ENCODE measurements at regions of chr7 and their contacts with region 1.

Region 1: DNA sequence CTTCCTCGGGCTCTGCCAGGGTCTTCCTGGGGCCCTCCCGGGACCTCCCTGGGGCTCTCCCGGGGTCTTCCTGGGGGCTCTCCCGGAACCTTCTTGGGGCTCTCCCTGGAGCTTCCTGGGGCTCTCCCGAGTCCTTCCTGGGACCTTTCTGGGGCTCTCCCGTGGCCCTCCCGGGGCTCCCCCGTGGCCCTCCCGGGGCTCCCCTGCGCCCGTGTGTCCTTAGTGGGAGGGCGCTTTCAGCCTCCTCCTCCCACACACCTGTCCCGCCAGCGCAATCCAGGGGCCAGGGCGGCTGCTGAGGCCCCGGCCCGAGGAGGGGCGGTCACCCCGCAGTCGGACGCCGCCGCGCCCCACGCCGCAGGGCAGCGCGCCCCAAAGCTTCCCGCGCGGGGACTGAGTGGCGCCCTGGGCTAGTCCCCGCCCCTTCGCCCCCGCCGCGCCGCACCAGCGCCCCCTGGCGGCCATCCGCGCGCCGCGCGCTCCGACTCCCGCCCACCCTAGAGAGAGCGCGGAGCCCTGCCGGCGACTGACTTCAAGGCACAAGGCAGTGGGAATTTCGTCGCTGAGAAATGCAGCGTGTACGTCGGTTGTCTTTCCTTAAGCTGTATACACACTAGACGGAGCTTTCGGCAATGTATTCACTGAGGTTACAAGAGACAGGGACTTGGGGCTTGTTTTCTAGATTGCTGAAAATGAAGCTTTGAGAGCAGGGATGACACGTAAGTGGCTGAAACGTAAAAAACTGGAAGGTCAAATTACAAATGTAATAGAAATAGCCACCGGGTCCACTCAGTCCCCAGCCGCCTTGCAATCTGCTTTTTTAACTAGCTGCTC is 47.1 kb downstream of the INSIG1 start:
- DNase-seq: peak; percentile 75 to 87 (median 78)
- H3K4me3 ChIP-seq: peak overlapping the region; percentile 41
- H3K4me3 Mint-ChIP-seq: peak overlapping the region in 6 of 7 donors; percentile 58 to 82 (median 69)
- H3K27ac ChIP-seq: no peak overlapping the region
- H3K27ac Mint-ChIP-seq: peak overlapping the region in 3 of 8 donors; percentile 47 to 52 (median 51)
- H3K4me1 ChIP-seq: peaks cover 4% of the 10 kb centered on the region
- H3K4me1 Mint-ChIP-seq: peaks cover 4 to 10% (median 6%) of the 10 kb centered on the region in 3 donors
- H3K27me3 ChIP-seq: peaks cover 4% of the 10 kb centered on the region
- H3K27me3 Mint-ChIP-seq: peaks cover 3 to 4% of the 10 kb centered on the region in 2 donors

Region 2: GRCh38 chr7:154913638-154914312 is 431.0 kb before region 1 on chr7:
- CTCF ChIA-PET with region 1: interaction called, 15 read pairs
- POLR2A ChIA-PET with region 1: no interaction called
- DNase-seq: peak; percentile 76 to 89 (median 82)
- H3K4me3 ChIP-seq: peak overlapping the region; percentile 52
- H3K4me3 Mint-ChIP-seq: peak overlapping the region; percentile 67 to 94 (median 88)
- H3K27ac ChIP-seq: no peak overlapping the region
- H3K27ac Mint-ChIP-seq: peak overlapping the region in 3 of 8 donors; percentile 81 to 98 (median 87)
- H3K4me1 ChIP-seq: no peaks in the 10 kb centered on the region
- H3K4me1 Mint-ChIP-seq: peaks cover 3 to 8% (median 5%) of the 10 kb centered on the region in 3 donors
- H3K27me3 ChIP-seq: peaks cover 4% of the 10 kb centered on the region
- H3K27me3 Mint-ChIP-seq: peaks cover 18 to 35% of the 10 kb centered on the region in 2 donors

Region 3: DNA sequence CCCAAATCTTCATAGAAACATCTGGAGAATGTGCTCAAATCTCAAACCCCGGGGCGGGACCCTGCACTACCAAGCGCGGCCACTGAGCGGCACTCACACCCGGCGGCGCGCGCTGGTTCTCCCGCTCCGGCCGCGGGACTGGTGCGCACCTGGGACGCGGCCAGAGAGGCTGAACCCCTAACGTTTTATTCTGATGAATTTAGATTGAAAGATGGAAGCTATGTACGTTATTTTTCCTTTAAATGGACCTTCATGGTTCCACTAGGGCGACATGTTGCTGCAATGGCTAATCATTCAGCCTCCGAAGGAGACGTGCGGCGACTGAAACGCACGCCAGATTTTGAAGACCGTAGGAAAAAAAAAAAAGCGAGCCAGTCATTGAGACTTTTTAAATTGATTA is 154.1 kb before region 1 on chr7:
- CTCF ChIA-PET with region 1: interaction called, 27 read pairs
- POLR2A ChIA-PET with region 1: no interaction called
- DNase-seq: peak; percentile 31 to 58 (median 50)
- H3K4me3 ChIP-seq: no peak overlapping the region
- H3K4me3 Mint-ChIP-seq: peak overlapping the region in 1 of 7 donors; percentile 34
- H3K27ac ChIP-seq: no peak overlapping the region
- H3K27ac Mint-ChIP-seq: no peak overlapping the region
- H3K4me1 ChIP-seq: no peaks in the 10 kb centered on the region
- H3K4me1 Mint-ChIP-seq: peaks cover 4 to 6% (median 4%) of the 10 kb centered on the region in 3 donors
- H3K27me3 ChIP-seq: no peaks in the 10 kb centered on the region
- H3K27me3 Mint-ChIP-seq: peaks cover 9 to 19% of the 10 kb centered on the region in 2 donors

Region 4: GRCh38 chr7:155234158-155234492 is 110.7 kb before region 1 on chr7:
- CTCF ChIA-PET with region 1: interaction called, 17 read pairs
- POLR2A ChIA-PET with region 1: no interaction called
- DNase-seq: no peak
- H3K4me3 ChIP-seq: no peak overlapping the region
- H3K4me3 Mint-ChIP-seq: no peak overlapping the region
- H3K27ac ChIP-seq: no peak overlapping the region
- H3K27ac Mint-ChIP-seq: no peak overlapping the region
- H3K4me1 ChIP-seq: no peaks in the 10 kb centered on the region
- H3K4me1 Mint-ChIP-seq: no peaks in the 10 kb centered on the region
- H3K27me3 ChIP-seq: no peaks in the 10 kb centered on the region
- H3K27me3 Mint-ChIP-seq: peaks cover 4 to 14% of the 10 kb centered on the region in 2 donors

Region 5: DNA sequence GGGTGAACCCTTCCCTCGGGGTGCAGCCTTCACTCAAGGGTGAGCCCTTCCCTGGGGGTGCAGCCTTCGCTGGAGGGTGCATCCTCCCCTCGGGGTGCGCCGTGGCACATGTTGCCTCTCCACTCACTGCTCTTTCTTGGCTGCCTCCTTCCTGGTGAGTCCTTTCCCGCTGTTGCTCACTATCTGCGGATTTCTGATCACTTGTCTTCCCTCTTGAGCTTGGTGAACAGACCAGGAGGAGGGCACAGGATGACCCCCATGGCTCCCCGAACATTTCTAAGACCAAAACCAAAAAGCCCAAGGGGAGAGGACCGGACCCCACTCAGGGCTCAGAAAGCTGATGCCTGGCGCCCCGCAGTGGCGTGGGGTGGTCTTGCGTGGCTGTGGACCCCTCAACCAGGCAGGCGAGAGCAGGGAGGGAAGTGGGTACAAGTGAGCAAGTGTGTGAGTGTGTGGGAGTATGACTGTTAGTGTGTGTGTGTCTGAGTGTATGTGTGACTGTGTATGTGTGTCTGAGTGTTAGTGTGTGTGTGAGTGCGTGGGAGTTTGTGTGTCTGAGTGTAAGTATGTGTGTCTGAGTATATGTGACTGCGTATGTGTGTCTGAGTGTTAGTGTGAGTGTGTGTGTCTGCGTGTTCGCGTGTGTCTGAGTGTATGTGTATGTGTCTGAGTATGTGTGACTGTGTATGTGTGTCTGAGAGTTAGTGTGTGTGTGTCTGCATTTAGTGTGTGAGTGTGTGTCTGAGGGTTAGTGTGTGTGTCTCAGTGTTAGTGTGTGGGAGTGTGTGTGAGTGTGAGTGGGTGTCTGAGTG is 81.3 kb before region 1 on chr7:
- CTCF ChIA-PET with region 1: interaction called, 11 read pairs
- POLR2A ChIA-PET with region 1: no interaction called
- DNase-seq: no peak
- H3K4me3 ChIP-seq: no peak overlapping the region
- H3K4me3 Mint-ChIP-seq: no peak overlapping the region
- H3K27ac ChIP-seq: no peak overlapping the region
- H3K27ac Mint-ChIP-seq: no peak overlapping the region
- H3K4me1 ChIP-seq: no peaks in the 10 kb centered on the region
- H3K4me1 Mint-ChIP-seq: peaks cover 0 to under 1% (median 0%) of the 10 kb centered on the region in 3 donors
- H3K27me3 ChIP-seq: no peaks in the 10 kb centered on the region
- H3K27me3 Mint-ChIP-seq: peaks cover 7 to 12% of the 10 kb centered on the region in 2 donors

Region 6: GRCh38 chr7:155356323-155357105 is 11.7 kb after region 1 on chr7:
- CTCF ChIA-PET with region 1: interaction called, 11 read pairs
- POLR2A ChIA-PET with region 1: no interaction called
- DNase-seq: peak in 1 of 5 donors; percentile 38
- H3K4me3 ChIP-seq: no peak overlapping the region
- H3K4me3 Mint-ChIP-seq: no peak overlapping the region
- H3K27ac ChIP-seq: no peak overlapping the region
- H3K27ac Mint-ChIP-seq: peak overlapping the region in 1 of 8 donors; percentile 25
- H3K4me1 ChIP-seq: no peaks in the 10 kb centered on the region
- H3K4me1 Mint-ChIP-seq: no peaks in the 10 kb centered on the region
- H3K27me3 ChIP-seq: peaks cover 6% of the 10 kb centered on the region
- H3K27me3 Mint-ChIP-seq: peaks cover 17 to 43% of the 10 kb centered on the region in 2 donors